Heart right ventricle (tissue), 16 donors: ENCODE measurements at regions of chr7 and their contacts with region 1.

Region 1: DNA sequence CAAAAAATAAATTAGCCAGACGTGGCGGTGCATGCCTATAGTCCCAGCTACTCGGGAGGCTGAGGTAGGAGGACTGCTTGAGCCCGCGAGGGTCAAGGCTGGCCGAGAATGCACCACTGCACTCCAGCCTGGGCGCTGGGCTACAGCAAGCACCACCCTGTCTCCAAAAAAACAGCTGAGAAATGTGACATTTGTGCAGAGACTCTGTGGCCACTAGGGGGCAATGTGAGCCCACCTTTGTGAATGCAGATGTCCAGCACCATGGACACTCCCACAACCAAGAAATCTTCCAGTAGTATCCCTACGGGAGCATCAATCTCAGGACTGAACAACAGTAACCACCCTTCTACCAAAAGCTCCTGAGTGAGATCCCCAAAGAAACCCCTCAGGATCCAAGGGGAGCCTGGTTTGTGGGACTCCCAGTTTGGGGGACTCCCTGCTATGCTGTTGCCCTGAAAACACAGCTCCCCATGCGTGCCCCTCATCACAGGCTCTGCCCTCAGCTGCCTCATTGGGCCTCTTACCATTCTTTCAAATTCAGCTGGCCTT is 6.2 kb upstream of the AHCYL2 start:
- DNase-seq: peak; percentile 73 to 86
- ATAC-seq: peak; percentile 81 to 95 (median 90)
- H3K4me3 ChIP-seq: no peak overlapping the region
- H3K27ac ChIP-seq: no peak overlapping the region
- H3K4me1 ChIP-seq: peaks cover 0 to 13% (median 0%) of the 10 kb centered on the region in 9 donors
- H3K27me3 ChIP-seq: no peaks in the 10 kb centered on the region
- CTCF ChIP-seq: peak; percentile 85 to 96 (median 89)

Region 2: DNA sequence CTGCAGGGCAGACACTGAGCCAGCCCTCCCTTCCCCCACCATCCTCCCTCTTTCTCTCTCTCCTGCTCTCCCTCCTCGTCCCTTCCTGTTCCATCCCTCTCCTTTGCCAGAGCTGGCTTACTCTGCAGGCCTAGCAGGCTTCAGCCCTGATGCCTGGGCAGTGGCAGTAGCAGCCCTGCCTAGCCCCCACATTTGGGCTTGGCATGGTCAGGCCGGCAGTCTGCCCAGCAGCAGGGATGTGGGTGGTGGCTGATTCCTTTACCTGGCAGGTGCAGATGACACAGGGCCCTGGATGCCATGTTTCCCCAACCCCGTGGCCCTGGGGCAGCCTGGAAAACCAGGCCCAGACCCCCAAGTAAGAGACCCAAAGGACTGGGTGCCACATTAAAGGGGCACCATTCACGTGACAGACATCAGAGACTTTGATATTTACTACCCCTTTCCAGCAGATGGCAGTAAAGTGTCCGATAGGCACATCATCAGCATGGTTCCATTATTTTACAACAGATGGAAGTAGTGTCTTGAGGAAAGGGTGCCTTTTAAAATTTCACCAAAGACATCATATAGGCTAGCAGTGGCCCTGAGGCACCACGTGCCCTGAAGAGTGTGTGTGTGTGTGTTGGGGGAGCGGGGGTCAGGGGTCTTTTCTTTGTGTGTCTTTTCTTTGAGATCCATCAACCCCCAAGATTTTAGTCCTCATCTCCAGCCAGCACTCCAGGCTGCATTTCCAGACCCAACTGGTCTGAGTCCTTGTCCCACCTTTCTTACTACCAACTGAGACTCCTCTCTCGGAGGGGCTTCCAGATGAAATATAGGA is 314.0 kb before region 1 on chr7:
- intact Hi-C with region 1: loop called in 2 of 10 experiments (anchors 10 kb)
- DNase-seq: no peak
- ATAC-seq: peak in 5 of 8 donors; percentile 16 to 60 (median 25)
- H3K4me3 ChIP-seq: no peak overlapping the region
- H3K27ac ChIP-seq: no peak overlapping the region
- H3K4me1 ChIP-seq: peaks cover 0 to 3% (median 2%) of the 10 kb centered on the region in 9 donors
- H3K27me3 ChIP-seq: peaks cover 0 to 50% (median 31%) of the 10 kb centered on the region in 7 donors
- CTCF ChIP-seq: peak; percentile 5 to 67 (median 58)

Region 3: DNA sequence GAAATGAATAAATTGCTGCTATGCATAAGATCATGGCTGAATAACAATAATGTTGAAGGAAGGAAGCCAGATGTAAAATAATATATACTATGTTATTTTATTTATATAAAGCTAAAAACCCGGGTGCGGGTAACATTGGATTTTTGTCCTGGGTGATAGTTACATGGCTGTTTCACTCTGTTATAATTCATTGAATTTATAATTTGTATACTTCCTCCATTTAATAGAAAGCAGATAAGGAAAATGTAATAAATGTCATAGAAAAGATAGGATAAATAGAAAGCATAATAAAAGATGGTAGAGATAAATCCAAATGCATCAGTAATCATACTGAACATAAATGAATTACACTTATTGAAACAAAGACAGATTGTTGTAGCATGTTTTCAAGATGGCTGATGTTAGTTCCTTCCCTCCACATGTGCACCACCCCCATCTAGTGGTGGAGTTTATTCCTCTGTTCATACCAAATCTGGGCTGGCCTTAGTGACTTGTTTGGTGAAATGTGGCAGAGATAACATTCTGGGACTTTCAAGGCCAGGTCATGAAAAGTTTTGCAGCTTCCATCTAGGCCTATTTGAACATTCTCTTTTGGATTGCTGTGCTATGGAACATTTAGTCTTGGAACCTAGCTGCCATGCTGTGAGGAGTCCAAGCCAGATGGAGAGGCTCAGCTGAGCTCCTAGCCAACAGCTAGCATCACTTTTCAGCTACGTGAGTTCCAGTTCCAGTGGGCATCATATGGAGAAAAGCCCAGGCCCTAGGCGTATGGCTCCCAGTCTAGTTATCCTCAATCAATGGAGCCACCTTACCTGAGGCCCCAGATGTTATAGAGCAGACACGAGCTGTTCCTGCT is 53.1 kb after region 1 on chr7:
- intact Hi-C with region 1: loop called in 1 of 10 experiments (anchors 2 kb)
- DNase-seq: peak in 1 of 2 donors; percentile 23
- ATAC-seq: peak in 1 of 8 donors; percentile 42
- H3K4me3 ChIP-seq: peak overlapping the region in 1 of 10 donors; percentile 18
- H3K27ac ChIP-seq: no peak overlapping the region
- H3K4me1 ChIP-seq: peaks cover 0 to 13% (median 0%) of the 10 kb centered on the region in 9 donors
- H3K27me3 ChIP-seq: no peaks in the 10 kb centered on the region
- CTCF ChIP-seq: peak in 8 of 9 donors; percentile 12 to 75 (median 44)

Region 4: DNA sequence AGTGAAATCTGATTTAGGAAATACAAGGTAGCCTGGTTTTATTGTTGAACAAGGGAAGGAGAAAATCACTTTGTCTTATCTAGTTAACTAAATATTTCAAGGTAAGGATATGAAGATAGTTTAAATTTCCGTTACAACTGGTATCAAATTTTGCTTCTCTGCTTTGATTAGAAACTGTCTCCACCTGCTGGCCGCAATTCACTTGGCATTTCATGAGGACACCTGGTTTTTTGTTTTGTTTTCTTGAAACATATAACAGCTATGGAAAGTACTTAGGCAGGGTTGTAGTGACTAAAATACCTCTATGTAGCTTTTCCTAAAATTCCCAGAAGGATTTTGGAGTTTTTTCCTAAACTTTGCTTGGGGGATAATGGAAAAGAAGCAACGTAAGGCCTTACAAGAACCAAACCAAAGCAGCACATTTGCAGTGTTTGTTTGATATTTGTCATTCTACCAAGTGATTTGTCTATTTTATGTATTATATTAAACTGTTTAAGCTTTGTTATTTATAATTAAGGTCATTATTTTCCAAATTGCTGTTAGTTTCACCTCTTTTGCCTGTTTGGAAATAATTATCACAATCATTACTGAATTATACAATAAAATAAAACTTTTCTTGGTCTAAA is 79.8 kb after region 1 on chr7:
- intact Hi-C with region 1: loop called in 9 of 10 experiments (anchors 1 to 5 kb)
- DNase-seq: peak; percentile 21 to 34
- ATAC-seq: no peak
- H3K4me3 ChIP-seq: no peak overlapping the region
- H3K27ac ChIP-seq: no peak overlapping the region
- H3K4me1 ChIP-seq: peaks cover 0 to 12% (median 8%) of the 10 kb centered on the region in 9 donors
- H3K27me3 ChIP-seq: no peaks in the 10 kb centered on the region
- CTCF ChIP-seq: peak; percentile 29 to 81 (median 73)

Region 5: DNA sequence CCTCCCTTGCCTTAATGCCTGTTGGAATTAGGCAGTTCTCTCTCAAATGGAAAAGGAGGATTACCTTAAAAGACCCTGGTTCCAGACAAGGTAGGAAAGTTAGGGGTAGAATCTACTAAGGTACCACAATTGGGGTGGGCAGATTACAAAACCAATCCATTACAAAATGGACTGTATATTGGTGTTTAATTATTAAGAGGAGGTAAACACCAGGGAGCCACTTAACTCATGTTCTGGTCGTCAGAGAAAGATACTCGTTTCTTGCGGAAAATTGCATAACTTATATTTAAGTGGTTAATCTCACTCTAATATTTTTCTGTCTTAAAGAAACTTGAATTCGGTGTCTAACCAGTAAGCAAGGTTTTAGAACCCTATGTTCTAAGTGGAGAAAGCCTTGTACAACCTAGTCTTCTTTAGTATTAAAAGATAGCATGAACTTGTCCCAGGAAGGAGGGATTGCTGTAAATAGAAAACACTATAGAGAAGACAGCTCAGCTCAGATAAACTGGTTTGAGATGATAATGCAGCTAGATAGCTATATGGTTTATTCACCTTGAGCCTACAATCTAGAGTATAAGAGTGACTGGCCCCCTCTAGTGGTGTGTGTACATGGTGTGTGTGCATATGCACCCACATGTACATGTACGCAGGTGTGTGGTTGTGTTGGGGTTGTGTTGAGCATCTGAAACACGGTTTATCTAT is 157.6 kb after region 1 on chr7:
- intact Hi-C with region 1: loop called in 1 of 10 experiments (anchors 10 kb)
- DNase-seq: peak in 1 of 2 donors; percentile 10
- ATAC-seq: peak in 1 of 8 donors; percentile 59
- H3K4me3 ChIP-seq: no peak overlapping the region
- H3K27ac ChIP-seq: no peak overlapping the region
- H3K4me1 ChIP-seq: peaks cover 0 to 15% (median 0%) of the 10 kb centered on the region in 9 donors
- H3K27me3 ChIP-seq: no peaks in the 10 kb centered on the region
- CTCF ChIP-seq: peak; percentile 11 to 64 (median 50)